IMR-90 (cell line): ENCODE measurements at regions of chr12 and their contacts with region 1.

Region 1: GRCh38 chr12:59890896-59891579 is 295.2 kb downstream of the SLC16A7 start:
- DNase-seq: no peak
- ATAC-seq: no peak
- H3K4me3 ChIP-seq: no peak overlapping the region
- H3K27ac ChIP-seq: no peak overlapping the region
- H3K4me1 ChIP-seq: no peaks in the 10 kb centered on the region
- H3K27me3 ChIP-seq: no peaks in the 10 kb centered on the region
- CTCF ChIP-seq: no peak
- POLR2A ChIP-seq: no peak
- RAD21 ChIP-seq: no peak

Region 2: DNA sequence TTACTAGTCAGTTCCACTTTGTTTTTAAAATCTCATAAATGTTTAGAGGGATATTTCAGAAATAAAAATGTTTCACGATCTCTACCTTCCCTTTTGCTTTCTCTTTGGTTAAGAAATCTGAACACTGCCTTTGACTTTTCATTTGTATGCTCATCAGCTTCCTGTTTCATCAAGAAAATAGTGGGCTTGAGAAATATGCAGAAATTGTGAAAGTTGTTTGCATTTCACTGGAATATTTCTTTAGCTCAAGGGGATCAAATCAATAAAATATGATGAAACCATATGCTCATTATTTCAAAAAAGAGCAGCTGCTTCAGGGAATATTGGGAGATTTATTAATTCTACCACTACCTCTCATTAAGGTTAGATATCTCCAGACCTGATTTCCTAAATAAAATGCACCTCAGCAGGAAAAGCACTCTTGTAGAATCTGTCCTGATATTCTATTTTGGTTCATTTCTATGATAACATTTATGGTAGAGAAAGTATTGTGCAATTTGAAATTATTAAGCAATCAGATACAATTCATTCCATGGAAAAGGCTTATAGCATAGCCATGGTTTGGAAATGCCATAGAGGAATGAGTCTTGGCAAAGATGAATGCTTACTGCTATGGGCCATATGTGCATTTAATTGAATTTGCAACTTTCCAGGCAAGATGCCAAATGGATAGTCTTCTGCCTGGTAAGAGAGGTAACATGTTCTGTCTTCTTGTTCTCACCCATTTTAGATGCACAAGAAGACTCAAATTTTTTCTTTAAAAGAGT is 507.8 kb before region 1 on chr12:
- CTCF ChIA-PET with region 1: no interaction called
- POLR2A ChIA-PET with region 1: no interaction called
- dilution Hi-C with region 1: no loop called
- in situ Hi-C with region 1: no loop called
- intact Hi-C with region 1: no loop called
- DNase-seq: peak; percentile 64
- ATAC-seq: peak; percentile 69
- H3K4me3 ChIP-seq: peak overlapping the region; percentile 36
- H3K27ac ChIP-seq: peak overlapping the region; percentile 85; the same call in 1 of the 2 replicates
- H3K4me1 ChIP-seq: no peaks in the 10 kb centered on the region
- H3K27me3 ChIP-seq: no peaks in the 10 kb centered on the region
- CTCF ChIP-seq: no peak
- POLR2A ChIP-seq: no peak
- RAD21 ChIP-seq: no peak

Region 3: GRCh38 chr12:59916988-59917387 is 25.9 kb after region 1 on chr12:
- CTCF ChIA-PET with region 1: no interaction called
- POLR2A ChIA-PET with region 1: no interaction called
- dilution Hi-C with region 1: no loop called
- in situ Hi-C with region 1: no loop called
- intact Hi-C with region 1: no loop called
- DNase-seq: no peak
- ATAC-seq: no peak
- H3K4me3 ChIP-seq: no peak overlapping the region
- H3K27ac ChIP-seq: no peak overlapping the region
- H3K4me1 ChIP-seq: no peaks in the 10 kb centered on the region
- H3K27me3 ChIP-seq: no peaks in the 10 kb centered on the region
- CTCF ChIP-seq: no peak
- POLR2A ChIP-seq: no peak
- RAD21 ChIP-seq: no peak

Region 4: DNA sequence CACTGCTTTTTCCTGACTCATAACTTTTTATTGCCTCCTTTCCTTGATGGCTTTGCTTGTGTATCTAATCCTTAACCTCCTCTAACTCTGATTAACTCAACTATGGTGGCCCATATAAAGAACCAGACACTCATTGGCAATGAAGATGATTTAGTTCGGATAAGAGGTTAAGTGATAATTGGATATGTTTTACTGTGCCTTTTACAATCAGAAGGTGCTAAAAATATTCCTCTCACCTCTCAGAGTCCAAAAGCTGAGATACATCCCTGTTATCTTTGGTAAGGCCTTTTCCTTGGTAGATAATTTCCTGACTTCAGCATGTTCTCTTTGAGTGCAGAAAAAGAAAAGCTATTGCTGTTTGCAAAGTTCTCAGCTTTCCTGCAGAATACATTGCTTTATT is 72.5 kb after region 1 on chr12:
- CTCF ChIA-PET with region 1: no interaction called
- POLR2A ChIA-PET with region 1: no interaction called
- dilution Hi-C with region 1: no loop called
- in situ Hi-C with region 1: loop called (anchors 5 kb)
- intact Hi-C with region 1: no loop called
- DNase-seq: no peak
- ATAC-seq: no peak
- H3K4me3 ChIP-seq: no peak overlapping the region
- H3K27ac ChIP-seq: no peak overlapping the region
- H3K4me1 ChIP-seq: peaks cover 2% of the 10 kb centered on the region
- H3K27me3 ChIP-seq: no peaks in the 10 kb centered on the region
- CTCF ChIP-seq: no peak
- POLR2A ChIP-seq: no peak
- RAD21 ChIP-seq: no peak